Posterior cingulate gyrus (tissue), 11 donors: ENCODE measurements at regions of chr10 and their contacts with region 1.

Region 1: GRCh38 chr10:101018600-101019439 is 12.1 kb downstream of the PDZD7 start:
- DNase-seq: peak; percentile 69 to 98 (median 88)

Region 2: DNA sequence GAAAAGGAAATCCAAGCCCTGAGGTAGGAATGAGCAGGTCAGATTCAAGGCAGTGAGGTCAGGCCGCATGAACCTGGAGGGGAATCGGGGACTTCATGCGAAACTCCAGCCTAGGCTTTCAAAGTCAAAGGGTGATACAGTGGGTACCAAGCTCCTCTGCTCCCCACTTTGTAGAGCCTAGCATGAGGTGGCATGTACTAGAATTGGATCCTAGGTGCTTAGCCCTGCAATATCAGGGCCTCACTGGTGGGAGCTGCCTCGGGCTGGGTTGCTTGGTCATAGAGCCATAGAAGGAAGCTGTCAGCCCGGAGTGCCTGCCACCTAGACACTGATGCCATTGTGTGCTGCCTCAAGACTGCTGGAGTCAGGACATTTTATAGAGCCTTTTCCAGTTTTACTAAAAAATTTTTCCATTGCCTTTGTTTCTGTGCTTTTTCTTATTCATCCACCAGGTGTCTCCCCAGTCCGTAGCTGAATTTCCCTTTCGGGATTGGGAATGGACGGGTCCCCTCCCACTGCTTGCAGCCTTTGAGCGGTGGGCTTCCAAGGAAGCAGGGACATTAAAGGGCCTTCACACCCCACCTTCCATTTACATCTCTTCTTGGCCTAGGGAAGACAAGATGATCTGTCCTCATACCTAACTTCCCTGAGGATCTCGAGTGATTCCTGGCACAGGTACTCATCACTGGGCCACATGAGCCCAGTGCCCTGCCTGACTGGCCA is 24.7 kb before region 1 on chr10:
- intact Hi-C with region 1: loop called (anchors 1 kb)
- DNase-seq: peak in 2 of 10 donors; percentile 48 to 52

Region 3: DNA sequence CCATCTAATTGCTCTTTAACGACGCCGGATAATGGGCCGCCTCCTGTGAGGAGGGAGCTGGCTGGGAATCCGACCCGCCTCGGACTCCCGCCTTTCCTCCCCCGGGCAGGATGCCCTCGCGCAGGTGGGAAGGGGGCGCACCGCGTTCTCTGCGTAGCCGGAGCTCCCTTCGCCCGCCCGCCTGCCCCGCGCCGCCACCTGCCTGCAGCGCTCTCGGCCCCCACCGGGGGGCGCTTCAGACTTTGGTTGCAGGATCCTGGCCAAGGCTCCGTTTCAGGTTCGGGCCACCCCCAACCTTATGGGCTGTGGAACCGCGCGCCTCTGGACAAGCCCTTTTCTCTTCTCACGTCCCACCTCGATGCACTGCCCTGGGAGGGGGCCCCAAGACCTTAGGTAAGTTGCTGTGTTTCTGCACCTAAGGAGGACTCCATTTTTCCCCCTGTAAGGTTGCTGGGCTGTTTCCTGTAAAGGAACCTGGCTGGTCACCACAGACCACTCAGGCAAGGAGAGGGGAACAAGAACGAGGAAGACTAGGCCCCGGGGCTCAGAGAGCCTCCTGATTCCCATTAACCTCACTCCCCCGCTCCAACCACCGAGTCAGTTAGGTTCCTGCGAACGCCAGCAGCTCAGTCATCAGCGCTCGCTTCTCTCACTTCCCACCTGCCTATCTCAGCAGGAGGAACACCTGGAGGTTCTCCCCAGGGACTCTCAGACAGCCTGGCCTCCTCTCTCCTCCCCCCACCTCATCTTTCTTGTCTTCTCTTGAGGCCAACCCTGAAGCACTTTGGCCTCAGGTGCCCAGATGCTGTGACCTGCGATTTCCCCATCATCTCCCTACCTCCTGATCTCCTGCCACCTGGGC is 31.6 kb after region 1 on chr10:
- intact Hi-C with region 1: no loop called
- DNase-seq: peak in 5 of 10 donors; percentile 41 to 90 (median 59)

Region 4: DNA sequence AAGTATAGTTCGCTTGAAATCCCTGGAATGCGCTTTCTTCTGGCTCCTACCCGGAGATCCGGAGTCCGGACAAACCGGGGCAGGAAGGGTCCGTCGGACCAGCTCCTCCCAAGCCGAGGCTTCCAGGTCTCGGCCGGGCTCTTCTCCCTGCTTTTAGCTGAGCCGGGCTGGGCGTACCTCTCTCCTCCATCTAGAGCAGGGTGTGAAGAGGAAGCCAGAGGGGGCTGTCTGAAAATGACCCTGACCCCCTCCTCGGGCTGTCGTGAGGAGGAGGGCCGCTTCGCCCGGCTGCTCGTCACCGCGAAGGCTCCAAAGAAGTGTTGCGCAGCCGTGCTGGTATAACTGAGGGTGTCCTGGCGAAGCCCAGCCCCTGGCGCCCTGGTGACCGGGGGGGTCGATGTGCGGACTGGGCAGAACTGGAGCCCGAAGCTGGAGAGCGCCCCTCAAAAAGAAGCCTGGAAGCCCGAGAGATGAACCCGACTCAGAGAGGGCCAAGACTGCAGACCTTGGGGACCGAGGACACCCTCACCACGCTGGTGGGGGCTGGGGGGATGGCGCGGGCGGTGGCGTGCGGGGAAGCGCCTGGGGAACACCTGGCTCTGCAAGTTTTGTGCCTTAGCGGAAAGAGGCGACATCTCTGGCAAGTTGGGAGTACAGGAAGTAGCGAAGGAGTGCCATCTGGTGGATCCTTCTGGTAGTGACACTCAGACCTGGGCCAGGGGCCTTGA is 48.7 kb after region 1 on chr10:
- intact Hi-C with region 1: loop called (anchors 2 kb)
- DNase-seq: peak in 9 of 10 donors; percentile 29 to 93 (median 73)